ENCODE measurements at regions of chr13 and their contacts with region 1.

Region 1: GRCh38 chr13:50529154-50529882 is 314.2 kb downstream of the DLEU7 start:
- DNase-seq: no peak
- H3K4me3 ChIP-seq: no peak overlapping the region
- H3K27ac ChIP-seq: no peak overlapping the region
- H3K4me1 ChIP-seq: peaks cover 54% of the 10 kb centered on the region
- CTCF ChIP-seq: no peak

Region 2: GRCh38 chr13:49976314-49977258 is 552.7 kb before region 1 on chr13:
- CTCF ChIA-PET with region 1: no interaction called
- POLR2A ChIA-PET with region 1: no interaction called
- intact Hi-C with region 1: loop called (anchors 1 kb)
- DNase-seq: peak; percentile 87
- H3K4me3 ChIP-seq: no peak overlapping the region
- H3K27ac ChIP-seq: no peak overlapping the region
- H3K4me1 ChIP-seq: peaks cover 8% of the 10 kb centered on the region
- CTCF ChIP-seq: peak; percentile 99

Region 3: DNA sequence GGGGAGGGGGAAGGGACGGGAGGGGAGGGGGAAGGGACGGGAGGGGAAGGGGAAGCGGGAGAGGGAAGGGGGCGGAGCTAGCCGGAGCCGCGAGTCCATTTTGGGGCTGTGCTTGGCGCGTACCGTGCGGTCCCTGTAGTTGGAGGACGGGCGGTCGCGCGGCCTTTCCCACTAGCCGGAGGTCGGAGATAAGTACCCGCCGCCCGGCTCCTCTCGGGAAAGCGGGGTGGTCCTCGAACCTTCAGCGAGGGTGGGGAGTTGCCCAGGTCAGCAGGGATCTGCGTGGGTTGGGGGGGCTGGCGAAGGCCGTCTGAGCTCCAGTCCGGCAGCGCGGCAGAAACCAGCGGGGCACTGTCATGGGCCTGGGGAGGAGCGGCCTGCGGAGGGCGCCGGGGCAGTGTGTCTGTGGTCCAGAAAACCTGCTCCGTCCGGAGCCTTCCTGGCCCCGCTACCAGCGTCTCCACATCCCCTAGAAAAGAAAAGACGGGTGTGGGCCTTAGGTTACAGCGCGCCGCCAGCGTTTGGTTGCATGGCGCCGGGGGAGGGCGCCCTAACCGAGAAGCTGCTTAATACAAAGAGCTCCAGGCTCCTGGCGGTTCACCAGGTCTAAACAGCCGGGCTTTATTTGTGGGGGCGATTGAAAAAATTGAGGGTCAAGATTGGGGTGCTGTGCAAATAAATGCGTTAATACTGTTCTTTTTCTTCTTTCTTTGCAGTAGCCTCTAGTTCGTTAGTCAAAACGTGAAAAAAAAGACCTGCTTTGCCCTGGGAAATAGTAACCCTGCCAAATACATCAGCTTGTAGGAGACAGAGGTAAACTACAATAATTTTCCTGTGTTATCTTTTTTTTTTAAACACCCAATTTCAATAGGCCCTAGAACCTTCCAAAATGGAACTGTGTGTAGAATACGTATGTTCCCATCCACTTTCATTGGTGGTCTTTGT is 532.1 kb before region 1 on chr13 and contains the start of gene TRIM13:
- CTCF ChIA-PET with region 1: interaction called, 3 read pairs
- POLR2A ChIA-PET with region 1: no interaction called
- intact Hi-C with region 1: loop called (anchors 5 kb)
- DNase-seq: peak; percentile 92
- H3K4me3 ChIP-seq: peak within 1 kb of the TSS; percentile 94
- H3K27ac ChIP-seq: peak within 1 kb of the TSS; percentile 87
- H3K4me1 ChIP-seq: peaks cover 39% of the 10 kb centered on the region
- CTCF ChIP-seq: peak; percentile 97
- total RNA-seq, gene TRIM13: 9.5 and 12.5 TPM in 2 replicates

Region 4: GRCh38 chr13:50081679-50082425 is 447.5 kb before region 1 on chr13:
- CTCF ChIA-PET with region 1: no interaction called
- POLR2A ChIA-PET with region 1: interaction called, 3 read pairs
- intact Hi-C with region 1: loop called (anchors 5 kb)
- DNase-seq: peak; percentile 98
- H3K4me3 ChIP-seq: peak overlapping the region; percentile 96
- H3K27ac ChIP-seq: peak overlapping the region; percentile 89
- H3K4me1 ChIP-seq: peaks cover 42% of the 10 kb centered on the region
- CTCF ChIP-seq: peak; percentile 63

Region 5: DNA sequence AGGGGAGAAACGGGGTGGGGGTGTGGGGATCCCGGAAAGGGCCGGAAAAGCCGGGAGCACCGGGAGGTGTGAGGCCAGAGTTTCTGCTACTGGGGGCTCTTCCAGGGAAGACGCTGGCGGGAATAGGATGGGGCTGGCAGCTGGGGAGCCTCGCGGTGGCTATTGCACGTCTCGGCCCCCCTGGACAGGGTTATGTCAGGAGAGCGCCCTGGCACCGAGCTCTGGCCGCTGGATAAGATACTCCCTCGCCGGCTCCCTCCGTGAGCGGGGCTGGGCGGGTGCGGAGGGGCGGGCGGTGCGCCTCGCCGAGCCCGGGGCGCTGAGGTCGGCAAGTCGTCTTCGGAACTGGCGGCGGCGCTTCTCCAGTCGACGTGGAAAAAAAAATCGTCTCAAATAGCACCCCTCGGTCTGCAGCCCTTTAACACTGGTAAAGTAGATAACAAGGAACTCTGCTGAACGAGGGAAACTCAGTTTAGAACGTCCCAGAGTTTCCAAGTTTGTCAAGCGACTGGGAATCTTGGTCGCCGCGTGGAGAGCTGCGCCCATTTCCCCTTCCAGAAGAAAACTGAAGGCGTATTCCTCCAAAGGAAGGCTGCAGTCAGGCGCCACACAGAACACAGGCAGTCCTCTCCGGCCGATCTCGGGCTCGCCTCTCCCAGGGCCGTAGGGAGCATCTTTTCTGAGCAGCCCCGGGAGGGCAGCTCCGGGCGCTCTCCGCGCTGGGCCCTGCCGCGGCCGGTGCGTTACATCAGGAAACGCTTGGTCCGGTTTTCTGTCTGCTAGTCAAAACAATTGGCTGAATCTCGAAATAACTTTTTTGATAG is 399.0 kb before region 1 on chr13:
- CTCF ChIA-PET with region 1: no interaction called
- POLR2A ChIA-PET with region 1: interaction called, 4 read pairs
- intact Hi-C with region 1: loop called (anchors 2 kb)
- DNase-seq: peak; percentile 65
- H3K4me3 ChIP-seq: peak overlapping the region; percentile 70
- H3K27ac ChIP-seq: peak overlapping the region; percentile 71
- H3K4me1 ChIP-seq: peaks cover 60% of the 10 kb centered on the region
- CTCF ChIP-seq: no peak

Region 6: DNA sequence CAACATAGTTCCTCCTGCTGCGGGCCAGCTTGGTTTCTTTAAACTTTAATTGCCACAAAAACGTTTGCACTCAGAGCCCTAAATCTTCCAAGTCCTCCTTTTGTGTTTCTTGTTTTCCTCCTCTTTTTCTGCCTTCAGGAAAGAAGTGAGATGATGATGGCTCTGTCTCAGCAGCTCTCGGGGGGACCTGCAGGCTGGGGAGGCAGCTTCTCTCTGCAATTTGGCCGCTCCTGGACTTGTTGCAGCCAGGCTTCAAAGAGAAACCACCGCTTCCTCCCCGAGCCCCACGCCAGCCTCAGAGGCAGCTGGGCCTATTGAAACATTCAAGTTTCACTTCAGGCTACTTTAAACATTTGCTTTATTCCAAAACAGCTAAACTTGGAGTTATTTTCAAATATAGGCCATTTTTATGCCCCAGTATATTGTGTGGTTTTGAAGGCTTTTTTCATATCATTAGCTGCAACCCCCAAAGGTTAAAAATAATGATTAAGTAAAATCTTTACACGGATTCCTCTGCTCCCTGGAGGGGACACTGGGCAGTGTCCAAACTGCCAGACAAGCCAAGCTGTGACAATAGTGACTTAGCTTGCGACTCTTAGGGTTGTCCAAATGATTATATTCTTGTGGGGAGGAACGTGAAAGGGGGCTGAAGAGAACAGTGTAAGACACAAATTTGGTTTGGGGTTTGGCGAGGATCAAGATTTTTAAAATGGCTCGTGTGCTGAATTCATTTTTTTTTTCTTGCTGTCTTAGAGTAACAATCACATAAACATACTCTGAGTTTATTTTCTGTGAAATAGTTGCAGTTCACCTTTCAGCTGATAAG is 16.6 kb before region 1 on chr13:
- CTCF ChIA-PET with region 1: interaction called, 8 read pairs
- POLR2A ChIA-PET with region 1: interaction called, 46 read pairs
- intact Hi-C with region 1: loop called (anchors 1 kb)
- DNase-seq: peak; percentile 95
- H3K4me3 ChIP-seq: peak overlapping the region; percentile 65
- H3K27ac ChIP-seq: peak overlapping the region; percentile 98
- H3K4me1 ChIP-seq: peaks cover 78% of the 10 kb centered on the region
- CTCF ChIP-seq: peak; percentile 68

Region 7: DNA sequence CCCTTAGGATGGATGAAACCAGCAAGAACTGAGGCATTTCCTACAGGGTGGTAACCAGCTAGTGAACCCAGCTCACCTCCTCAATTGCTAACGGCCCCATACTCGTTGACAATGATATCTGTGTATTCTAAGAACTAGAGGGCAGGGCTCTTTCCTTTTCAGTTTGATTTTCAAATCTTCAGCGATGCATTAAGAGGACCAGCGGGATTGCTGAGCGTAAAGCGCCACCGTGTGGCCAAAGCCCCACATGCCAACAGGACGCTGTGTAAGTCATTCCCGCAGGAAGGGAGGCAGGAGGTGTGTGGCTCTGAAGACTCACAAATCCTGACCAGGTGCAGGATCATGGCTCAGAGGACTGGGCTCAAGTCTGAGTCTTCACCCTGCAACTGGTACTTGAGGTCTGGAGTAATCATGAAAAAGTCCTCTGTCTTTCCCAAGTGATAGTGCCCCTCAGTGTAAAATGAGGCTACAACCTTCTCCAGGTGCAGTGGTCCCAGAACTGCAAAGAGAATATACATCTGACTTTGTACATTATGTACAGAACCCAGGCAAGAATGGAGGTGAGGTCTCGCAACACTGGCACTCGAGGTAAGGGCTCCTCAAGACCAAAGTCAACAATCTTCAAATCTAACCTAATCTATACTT is 540.8 kb after region 1 on chr13:
- CTCF ChIA-PET with region 1: no interaction called
- POLR2A ChIA-PET with region 1: no interaction called
- intact Hi-C with region 1: loop called (anchors 5 kb)
- DNase-seq: peak; percentile 88
- H3K4me3 ChIP-seq: no peak overlapping the region
- H3K27ac ChIP-seq: no peak overlapping the region
- H3K4me1 ChIP-seq: peaks cover 5% of the 10 kb centered on the region
- CTCF ChIP-seq: peak; percentile 98